Activated CD4-positive, alpha-beta T cell treated with anti-CD3 and anti-CD28 coated beads, Interleukin-2, amount 10 ng/mL, durations not matched to agents 7 days and 5 days (primary cell): ENCODE measurements at regions of chr6 and their contacts with region 1.

Region 1: GRCh38 chr6:149734915-149735314 is 11.4 kb downstream of the NUP43 start:
- DNase-seq: no peak
- H3K4me3 Mint-ChIP-seq: no peak overlapping the region
- H3K27ac Mint-ChIP-seq: no peak overlapping the region
- H3K4me1 Mint-ChIP-seq: peaks cover 10% of the 10 kb centered on the region
- H3K27me3 Mint-ChIP-seq: no peaks in the 10 kb centered on the region

Region 2: DNA sequence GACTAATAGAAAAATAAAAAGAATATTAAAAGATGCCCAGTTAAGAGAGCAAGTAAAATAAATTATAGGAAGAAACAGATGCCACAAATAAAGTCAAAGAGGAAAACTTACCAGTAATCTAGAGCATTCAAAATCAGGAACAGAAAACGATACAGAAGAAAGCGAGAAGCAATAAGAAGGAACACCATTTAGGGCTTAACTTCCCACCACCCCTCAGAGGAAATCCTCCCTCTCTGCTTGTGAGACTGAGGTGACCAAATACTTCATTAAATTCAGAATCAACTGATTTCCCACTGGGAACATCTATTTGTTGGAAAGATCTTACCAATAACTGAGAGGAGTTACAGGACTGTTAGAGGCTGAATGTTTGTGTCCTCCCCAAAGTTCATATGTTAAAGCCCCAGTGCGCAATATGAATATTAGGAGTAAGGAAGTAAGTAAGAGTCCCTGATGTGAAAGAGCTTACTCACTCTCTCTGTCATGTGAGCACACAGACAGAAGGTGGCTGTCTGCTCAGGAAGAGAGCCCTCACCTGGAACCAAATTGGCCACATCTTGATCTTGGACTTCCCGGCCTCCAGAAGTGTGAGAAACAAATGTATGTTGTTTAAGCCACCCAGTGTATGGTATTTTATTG is 105.9 kb before region 1 on chr6:
- CTCF ChIA-PET with region 1: no interaction called
- POLR2A ChIA-PET with region 1: no interaction called
- DNase-seq: no peak
- H3K4me3 Mint-ChIP-seq: no peak overlapping the region
- H3K27ac Mint-ChIP-seq: peak overlapping the region; percentile 33
- H3K4me1 Mint-ChIP-seq: peaks cover 14% of the 10 kb centered on the region
- H3K27me3 Mint-ChIP-seq: no peaks in the 10 kb centered on the region

Region 3: GRCh38 chr6:149711711-149712110 is 23.2 kb before region 1 on chr6:
- CTCF ChIA-PET with region 1: no interaction called
- POLR2A ChIA-PET with region 1: no interaction called
- DNase-seq: no peak
- H3K4me3 Mint-ChIP-seq: no peak overlapping the region
- H3K27ac Mint-ChIP-seq: peak overlapping the region; percentile 36
- H3K4me1 Mint-ChIP-seq: peaks cover 44% of the 10 kb centered on the region
- H3K27me3 Mint-ChIP-seq: no peaks in the 10 kb centered on the region

Region 4: GRCh38 chr6:149746147-149746946 is 11.4 kb after region 1 on chr6 and contains the start of gene NUP43:
- CTCF ChIA-PET with region 1: interaction called, 11 read pairs
- POLR2A ChIA-PET with region 1: no interaction called
- DNase-seq: peak; percentile 95
- H3K4me3 Mint-ChIP-seq: peak within 1 kb of the TSS; percentile 100
- H3K27ac Mint-ChIP-seq: peak within 1 kb of the TSS; percentile 95
- H3K4me1 Mint-ChIP-seq: peaks cover 33% of the 10 kb centered on the region
- H3K27me3 Mint-ChIP-seq: no peaks in the 10 kb centered on the region
- total RNA-seq, gene NUP43: 59.9 to 74.6 TPM

Region 5: GRCh38 chr6:149884215-149884614 is 149.3 kb after region 1 on chr6:
- CTCF ChIA-PET with region 1: no interaction called
- POLR2A ChIA-PET with region 1: no interaction called
- DNase-seq: no peak
- H3K4me3 Mint-ChIP-seq: no peak overlapping the region
- H3K27ac Mint-ChIP-seq: no peak overlapping the region
- H3K4me1 Mint-ChIP-seq: no peaks in the 10 kb centered on the region
- H3K27me3 Mint-ChIP-seq: peaks cover 23% of the 10 kb centered on the region

Region 6: GRCh38 chr6:150057501-150057951 is 322.6 kb after region 1 on chr6:
- CTCF ChIA-PET with region 1: no interaction called
- POLR2A ChIA-PET with region 1: no interaction called
- DNase-seq: no peak
- H3K4me3 Mint-ChIP-seq: no peak overlapping the region
- H3K27ac Mint-ChIP-seq: no peak overlapping the region
- H3K4me1 Mint-ChIP-seq: peaks cover 12% of the 10 kb centered on the region
- H3K27me3 Mint-ChIP-seq: peaks cover 38% of the 10 kb centered on the region